ENCODE measurements at regions of chr1 and their contacts with region 1.

Region 1: DNA sequence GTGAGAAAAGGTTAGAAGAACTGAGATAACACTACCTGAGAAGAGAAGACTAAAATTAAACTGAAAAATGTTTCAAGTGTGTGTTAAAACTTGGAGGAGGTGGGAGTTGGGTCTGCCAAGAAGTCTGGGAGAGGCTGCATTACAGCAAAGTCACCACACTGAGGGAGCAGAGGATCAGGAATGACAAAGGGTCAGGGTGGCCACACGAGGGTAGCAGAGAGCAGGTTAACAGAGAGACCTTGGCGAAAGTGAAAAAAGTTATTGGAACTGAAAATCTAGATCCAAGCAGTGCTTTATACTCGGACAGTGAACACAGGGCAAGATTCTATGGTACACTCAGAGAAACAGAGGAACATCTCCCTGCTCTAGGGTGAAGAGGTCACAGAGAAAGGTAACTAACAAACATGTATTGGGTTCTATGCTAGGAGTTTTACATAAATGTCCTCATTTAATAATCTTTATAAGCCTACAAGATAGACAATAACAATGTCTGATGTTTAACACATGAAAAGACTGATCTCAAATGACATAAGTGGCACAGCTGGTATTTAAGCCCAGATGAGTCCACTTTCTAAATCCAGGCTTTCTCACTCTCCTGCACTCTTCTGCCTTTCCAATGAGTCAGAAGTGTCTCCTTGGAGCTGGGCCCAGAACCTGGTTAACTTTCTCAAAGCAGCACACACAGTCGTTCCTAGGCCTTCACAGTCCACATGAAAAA is 10.3 kb upstream of the CADM3 start:
- DNase-seq: peak; percentile 78 to 85
- H3K4me3 ChIP-seq: no peak overlapping the region
- H3K27ac ChIP-seq: peak overlapping the region in 1 of 3 donors; percentile 34
- H3K4me1 ChIP-seq: peaks cover 6 to 7% of the 10 kb centered on the region in 2 donors
- H3K27me3 ChIP-seq: no peaks in the 10 kb centered on the region
- CTCF ChIP-seq: peak; percentile 75 to 100 (median 95)
- POLR2A ChIP-seq: no peak

Region 2: DNA sequence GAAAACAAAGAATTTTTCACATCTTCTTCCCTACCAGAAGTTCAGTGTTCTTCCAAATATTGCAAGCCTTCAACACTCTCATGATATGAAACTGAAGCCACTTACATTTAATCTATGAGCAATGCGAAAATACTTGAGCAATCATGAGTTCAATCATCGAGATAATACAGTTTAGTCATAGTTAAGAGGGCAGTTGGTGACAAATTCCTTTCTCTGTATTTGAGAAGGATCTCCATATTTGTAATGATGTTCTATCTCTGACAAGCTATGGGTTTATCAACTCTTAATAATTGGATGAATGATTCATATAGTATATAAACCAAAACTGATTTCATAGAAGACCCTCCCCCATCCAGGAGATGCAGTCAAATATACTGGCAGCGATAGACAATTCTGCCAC is 259.5 kb before region 1 on chr1:
- intact Hi-C with region 1: no loop called
- DNase-seq: no peak
- H3K4me3 ChIP-seq: no peak overlapping the region
- H3K27ac ChIP-seq: no peak overlapping the region
- H3K4me1 ChIP-seq: no peaks in the 10 kb centered on the region
- H3K27me3 ChIP-seq: no peaks in the 10 kb centered on the region
- CTCF ChIP-seq: no peak
- POLR2A ChIP-seq: no peak

Region 3: DNA sequence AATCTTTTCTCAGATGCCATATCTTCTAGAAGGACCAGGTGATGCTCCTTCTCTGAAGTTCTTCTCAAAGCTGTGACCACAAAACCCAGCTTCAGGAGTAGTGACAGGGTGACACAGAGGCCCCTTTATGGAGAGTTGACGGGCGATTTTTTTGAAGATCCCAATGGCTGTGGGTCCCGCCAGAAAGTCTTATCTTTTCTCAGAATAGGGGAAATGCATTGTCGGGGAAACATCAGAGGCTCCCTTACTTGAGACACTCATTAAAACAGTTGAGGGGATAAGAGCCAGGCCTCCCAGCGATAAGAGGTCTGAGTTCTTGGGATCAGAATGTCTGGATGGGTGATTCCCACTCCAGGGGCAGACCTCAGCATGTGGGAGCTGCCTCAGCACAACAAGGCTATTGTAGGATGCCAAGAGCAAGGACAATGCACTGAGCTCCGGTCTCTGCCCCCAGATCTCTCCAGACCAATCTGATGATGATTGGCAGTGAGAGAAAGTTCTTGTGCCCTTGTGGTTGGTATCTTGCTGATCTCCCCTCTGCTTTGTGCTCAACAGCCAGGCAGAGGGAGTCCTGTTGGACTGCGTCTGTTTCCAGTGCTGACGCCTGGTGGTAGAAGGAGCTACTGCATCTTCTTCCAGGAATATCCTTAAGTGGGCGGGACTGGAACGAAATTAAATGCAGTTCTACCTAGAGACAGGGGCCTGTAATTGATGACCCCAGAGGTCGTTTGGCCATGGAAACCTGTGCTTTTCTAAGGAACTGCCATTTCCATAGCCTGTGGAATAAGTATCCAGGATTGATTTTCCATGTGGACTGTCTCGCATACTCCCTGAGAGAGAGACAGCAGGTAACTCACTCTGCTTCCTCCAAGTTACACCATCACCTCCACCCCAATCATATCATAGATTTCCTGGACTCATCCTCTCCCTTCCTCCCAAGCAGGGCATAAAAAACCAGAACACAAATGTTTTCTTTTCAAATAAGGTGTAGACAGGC is 36.7 kb after region 1 on chr1:
- intact Hi-C with region 1: loop called (anchors 5 kb)
- DNase-seq: peak; percentile 74 to 79
- H3K4me3 ChIP-seq: no peak overlapping the region
- H3K27ac ChIP-seq: no peak overlapping the region
- H3K4me1 ChIP-seq: no peaks in the 10 kb centered on the region
- H3K27me3 ChIP-seq: no peaks in the 10 kb centered on the region
- CTCF ChIP-seq: peak; percentile 38 to 86 (median 80)
- POLR2A ChIP-seq: no peak

Region 4: GRCh38 chr1:159214149-159214760 is 53.1 kb after region 1 on chr1:
- intact Hi-C with region 1: loop called (anchors 5 kb)
- DNase-seq: peak; percentile 30 to 34
- H3K4me3 ChIP-seq: no peak overlapping the region
- H3K27ac ChIP-seq: no peak overlapping the region
- H3K4me1 ChIP-seq: peaks cover 0 to 9% of the 10 kb centered on the region in 2 donors
- H3K27me3 ChIP-seq: no peaks in the 10 kb centered on the region
- CTCF ChIP-seq: peak; percentile 42 to 94 (median 69)
- POLR2A ChIP-seq: no peak

Region 5: GRCh38 chr1:159448181-159448580 is 287.0 kb after region 1 on chr1:
- intact Hi-C with region 1: no loop called
- DNase-seq: no peak
- H3K4me3 ChIP-seq: no peak overlapping the region
- H3K27ac ChIP-seq: no peak overlapping the region
- H3K4me1 ChIP-seq: no peaks in the 10 kb centered on the region
- H3K27me3 ChIP-seq: no peaks in the 10 kb centered on the region
- CTCF ChIP-seq: no peak
- POLR2A ChIP-seq: no peak

Measured in thyroid gland (tissue), 4 donors.